ENCODE measurements at regions of chr18 and their contacts with region 1.

Region 1: GRCh38 chr18:6553234-6553900 is 138.7 kb upstream of the L3MBTL4 start:
- DNase-seq: no peak
- ATAC-seq: no peak

Region 2: DNA sequence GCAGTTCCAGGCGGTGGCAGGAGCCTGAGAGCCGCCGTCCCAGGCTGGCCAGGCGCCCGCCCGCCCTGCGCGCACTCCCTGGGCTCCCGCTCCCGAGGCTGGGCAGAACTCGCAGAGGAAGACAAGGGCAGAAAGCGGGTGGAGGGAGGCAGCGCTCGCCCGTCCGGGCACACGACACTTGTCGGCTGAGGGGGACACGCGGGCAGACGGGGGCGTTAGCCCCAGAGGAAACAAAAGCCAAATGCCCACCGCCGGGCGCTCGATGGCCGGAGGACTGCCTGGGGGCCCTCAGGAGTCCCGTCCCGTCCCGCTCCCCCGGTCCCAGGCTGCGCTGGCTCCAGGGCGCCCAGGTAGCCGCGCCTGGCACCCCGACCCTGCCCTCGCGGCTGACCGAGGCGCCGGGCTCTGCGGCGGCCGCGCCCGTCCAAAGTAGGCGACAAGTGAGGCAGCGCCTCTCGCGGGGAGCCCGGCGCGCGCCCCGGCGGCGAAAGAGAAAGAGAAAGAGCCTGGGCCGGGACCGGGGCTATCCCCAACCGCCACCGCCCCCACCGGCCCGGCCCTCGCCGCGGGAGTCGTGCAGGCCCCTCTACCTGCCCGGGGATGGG is 139.1 kb before region 1 on chr18:
- intact Hi-C with region 1: no loop called
- DNase-seq: peak; percentile 73 to 80
- ATAC-seq: peak; percentile 94

Region 3: GRCh38 chr18:6874316-6874715 is 320.9 kb after region 1 on chr18:
- intact Hi-C with region 1: loop called in 1 of 2 experiments (anchors 5 kb)
- DNase-seq: no peak
- ATAC-seq: no peak